ENCODE measurements at regions of chr21 and their contacts with region 1.

Region 1: GRCh38 chr21:36141513-36141925 is 6.6 kb downstream of the CBR3 start:
- DNase-seq: peak; percentile 67
- H3K4me3 ChIP-seq: no peak overlapping the region; a peak in 1 of 4 replicates
- H3K27ac ChIP-seq: no peak overlapping the region
- H3K4me1 ChIP-seq: no peaks in the 10 kb centered on the region; a peak in 1 of 4 replicates
- H3K27me3 ChIP-seq: no peaks in the 10 kb centered on the region
- CTCF ChIP-seq: peak; percentile 95
- EP300 ChIP-seq: no peak
- RAD21 ChIP-seq: peak; percentile 86

Region 2: DNA sequence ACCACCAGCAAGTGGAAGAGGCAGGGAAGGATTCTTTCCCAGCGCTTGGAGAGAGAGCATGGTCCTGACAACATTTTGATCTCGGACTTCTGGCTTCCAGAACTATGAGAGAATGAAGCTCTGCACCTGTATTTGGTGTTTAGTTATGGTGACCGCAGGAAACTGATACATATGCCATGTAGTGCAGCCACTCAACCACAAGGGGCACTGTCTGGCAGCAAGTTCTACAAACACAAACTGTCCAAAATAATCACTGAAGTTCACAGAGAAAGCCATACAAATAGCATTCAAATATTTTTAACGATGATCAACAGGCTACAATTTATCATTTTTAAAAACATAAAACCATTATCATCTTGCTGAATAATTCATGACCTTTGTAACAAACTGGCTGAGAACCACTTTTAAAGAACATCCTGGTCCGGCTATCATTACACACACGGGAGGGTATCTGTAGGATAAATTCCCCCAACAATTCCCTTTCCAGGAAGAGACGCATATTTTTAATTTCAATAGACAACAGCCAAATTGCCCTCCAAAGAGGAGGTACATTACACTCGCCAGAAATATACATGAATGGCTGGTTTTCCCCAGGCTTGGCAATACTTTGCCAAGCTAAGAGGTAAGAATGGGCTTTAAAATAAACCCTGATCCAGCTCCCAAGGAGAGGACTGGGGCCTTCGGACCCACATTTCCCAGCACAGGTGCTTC is 15.9 kb before region 1 on chr21:
- CTCF ChIA-PET with region 1: interaction called, 38 read pairs
- POLR2A ChIA-PET with region 1: no interaction called
- DNase-seq: peak; percentile 60
- H3K4me3 ChIP-seq: no peak overlapping the region; a peak in 1 of 4 replicates
- H3K27ac ChIP-seq: no peak overlapping the region
- H3K4me1 ChIP-seq: no peaks in the 10 kb centered on the region
- H3K27me3 ChIP-seq: no peaks in the 10 kb centered on the region
- CTCF ChIP-seq: peak; percentile 94
- EP300 ChIP-seq: no peak
- RAD21 ChIP-seq: peak; percentile 60

Region 3: GRCh38 chr21:36217743-36218142 is 76.2 kb after region 1 on chr21:
- CTCF ChIA-PET with region 1: interaction called, 10 read pairs
- POLR2A ChIA-PET with region 1: no interaction called
- DNase-seq: no peak
- H3K4me3 ChIP-seq: no peak overlapping the region
- H3K27ac ChIP-seq: no peak overlapping the region
- H3K4me1 ChIP-seq: peaks cover 0 to 3% of the 10 kb centered on the region in 2 experiments; a peak in 2 of 4 replicates
- H3K27me3 ChIP-seq: no peaks in the 10 kb centered on the region
- CTCF ChIP-seq: no peak
- EP300 ChIP-seq: no peak
- RAD21 ChIP-seq: no peak

Region 4: DNA sequence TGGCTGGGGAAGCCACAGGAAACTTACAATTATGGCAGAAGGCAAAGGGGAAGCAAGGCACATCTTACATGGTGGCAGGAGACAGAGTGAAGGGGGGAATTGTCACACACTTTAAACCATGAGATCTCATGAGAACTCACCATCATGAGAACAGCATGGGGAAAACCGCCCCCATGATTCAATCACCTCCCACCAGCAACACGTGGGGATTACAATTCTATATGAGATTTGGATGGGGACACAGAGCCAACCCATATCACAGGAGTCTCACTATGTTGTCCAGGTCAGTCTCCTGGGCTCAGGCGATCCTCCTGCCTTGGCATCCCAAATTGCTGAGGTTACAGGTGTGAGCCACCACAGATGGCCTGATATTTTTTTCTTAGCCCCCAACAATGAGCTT is 155.9 kb after region 1 on chr21:
- CTCF ChIA-PET with region 1: no interaction called
- POLR2A ChIA-PET with region 1: no interaction called
- DNase-seq: no peak
- H3K4me3 ChIP-seq: no peak overlapping the region
- H3K27ac ChIP-seq: no peak overlapping the region
- H3K4me1 ChIP-seq: no peaks in the 10 kb centered on the region
- H3K27me3 ChIP-seq: no peaks in the 10 kb centered on the region
- CTCF ChIP-seq: no peak
- EP300 ChIP-seq: no peak
- RAD21 ChIP-seq: no peak

Region 5: DNA sequence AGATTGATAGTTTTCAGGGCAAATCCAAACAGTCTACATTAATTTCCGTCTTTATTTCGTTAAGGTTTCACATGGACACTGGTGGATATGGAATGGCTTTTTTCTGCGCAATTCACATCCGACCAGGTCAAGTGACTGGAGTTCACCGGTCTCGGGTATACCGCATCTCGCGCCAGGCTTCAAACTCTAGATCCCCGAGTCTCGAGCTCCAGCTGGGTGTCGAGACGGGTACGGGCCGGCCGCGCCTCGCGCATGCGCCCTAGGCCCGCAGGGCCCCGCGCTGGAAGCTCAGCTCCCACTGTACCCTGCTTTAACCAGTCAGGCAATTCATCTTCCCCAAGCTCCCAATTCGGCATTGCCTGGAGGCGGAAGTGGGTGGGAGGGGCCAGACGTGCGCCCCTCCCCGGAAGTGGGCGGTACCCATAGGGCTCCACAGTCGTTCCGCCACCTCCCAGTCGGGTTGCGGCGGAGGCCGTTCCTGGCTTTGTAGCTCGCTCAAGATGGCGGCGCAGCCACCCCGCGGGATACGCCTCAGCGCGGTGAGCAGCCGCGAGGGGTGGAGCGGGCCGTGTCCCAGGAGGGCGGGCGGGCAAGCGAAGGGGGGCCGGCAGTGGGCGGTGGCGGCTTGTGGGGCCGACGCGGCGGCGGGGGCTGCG is 178.4 kb after region 1 on chr21 and contains the start of gene MORC3:
- CTCF ChIA-PET with region 1: interaction called, 14 read pairs
- POLR2A ChIA-PET with region 1: no interaction called
- DNase-seq: peak; percentile 98
- H3K4me3 ChIP-seq: peak within 1 kb of the TSS; percentile 65 to 80
- H3K27ac ChIP-seq: peak within 1 kb of the TSS; percentile 85 to 91
- H3K4me1 ChIP-seq: peaks cover 0 to 6% of the 10 kb centered on the region in 2 experiments; a peak in 3 of 4 replicates
- H3K27me3 ChIP-seq: no peaks in the 10 kb centered on the region
- CTCF ChIP-seq: no peak
- EP300 ChIP-seq: no peak
- RAD21 ChIP-seq: no peak
- polyA plus RNA-seq, gene MORC3: 8.2 and 10.7 TPM in 2 replicates

Region 6: GRCh38 chr21:36333271-36333670 is 191.8 kb after region 1 on chr21:
- CTCF ChIA-PET with region 1: interaction called, 12 read pairs
- POLR2A ChIA-PET with region 1: no interaction called
- DNase-seq: no peak
- H3K4me3 ChIP-seq: no peak overlapping the region
- H3K27ac ChIP-seq: no peak overlapping the region
- H3K4me1 ChIP-seq: peaks cover 0 to 10% of the 10 kb centered on the region in 2 experiments; a peak in 1 of 4 replicates
- H3K27me3 ChIP-seq: no peaks in the 10 kb centered on the region
- CTCF ChIP-seq: no peak
- EP300 ChIP-seq: no peak
- RAD21 ChIP-seq: no peak